Gastrocnemius medialis (tissue), 4 donors: ENCODE measurements at regions of chr17 and their contacts with region 1.

Region 1: GRCh38 chr17:74296548-74296936 is 22.5 kb downstream of the DNAI2 start:
- DNase-seq: peak; percentile 16 to 41
- ATAC-seq: peak; percentile 78 to 79
- H3K4me3 ChIP-seq: no peak overlapping the region
- H3K27ac ChIP-seq: no peak overlapping the region
- H3K4me1 ChIP-seq: no peaks in the 10 kb centered on the region
- H3K27me3 ChIP-seq: no peaks in the 10 kb centered on the region
- CTCF ChIP-seq: peak; percentile 11 to 53 (median 27)
- POLR2A ChIP-seq: no peak

Region 2: GRCh38 chr17:74240618-74241205 is 55.8 kb before region 1 on chr17:
- in situ Hi-C with region 1: no loop called
- intact Hi-C with region 1: no loop called
- DNase-seq: no peak
- ATAC-seq: no peak
- H3K4me3 ChIP-seq: no peak overlapping the region
- H3K27ac ChIP-seq: no peak overlapping the region
- H3K4me1 ChIP-seq: peaks cover 13 to 19% of the 10 kb centered on the region in 2 donors
- H3K27me3 ChIP-seq: no peaks in the 10 kb centered on the region
- CTCF ChIP-seq: no peak
- POLR2A ChIP-seq: no peak

Region 3: GRCh38 chr17:74325743-74326379 is 29.3 kb after region 1 on chr17 and contains the start of gene KIF19:
- in situ Hi-C with region 1: no loop called
- intact Hi-C with region 1: no loop called
- DNase-seq: peak; percentile 12 to 35
- ATAC-seq: peak; percentile 71 to 74
- H3K4me3 ChIP-seq: peak within 1 kb of the TSS; percentile 51 to 69 (median 58)
- H3K27ac ChIP-seq: peak within 1 kb of the TSS; percentile 0 to 66 (median 42)
- H3K4me1 ChIP-seq: peaks cover 10 to 14% of the 10 kb centered on the region in 2 donors
- H3K27me3 ChIP-seq: no peaks in the 10 kb centered on the region
- CTCF ChIP-seq: no peak
- POLR2A ChIP-seq: no peak
- total RNA-seq, gene KIF19: 0.41 to 1.8 (median 0.62) TPM in 3 of 4 donors, not detected in the other

Region 4: GRCh38 chr17:74361230-74362068 is 64.9 kb after region 1 on chr17 and contains the start of gene BTBD17:
- in situ Hi-C with region 1: loop called in 1 of 4 experiments (anchors 10 kb)
- intact Hi-C with region 1: loop called (anchors 1 kb)
- DNase-seq: peak; percentile 13 to 39
- ATAC-seq: peak in 1 of 2 donors; percentile 53
- H3K4me3 ChIP-seq: no peak within 1 kb of the TSS
- H3K27ac ChIP-seq: no peak within 1 kb of the TSS
- H3K4me1 ChIP-seq: no peaks in the 10 kb centered on the region
- H3K27me3 ChIP-seq: peaks cover 38 to 41% (median 38%) of the 10 kb centered on the region in 3 donors
- CTCF ChIP-seq: peak; percentile 22 to 80 (median 70)
- POLR2A ChIP-seq: no peak
- total RNA-seq, gene BTBD17: not detected